CD8-positive, alpha-beta memory T cell (primary cell): ENCODE measurements at regions of chr6 and their contacts with region 1.

Region 1: DNA sequence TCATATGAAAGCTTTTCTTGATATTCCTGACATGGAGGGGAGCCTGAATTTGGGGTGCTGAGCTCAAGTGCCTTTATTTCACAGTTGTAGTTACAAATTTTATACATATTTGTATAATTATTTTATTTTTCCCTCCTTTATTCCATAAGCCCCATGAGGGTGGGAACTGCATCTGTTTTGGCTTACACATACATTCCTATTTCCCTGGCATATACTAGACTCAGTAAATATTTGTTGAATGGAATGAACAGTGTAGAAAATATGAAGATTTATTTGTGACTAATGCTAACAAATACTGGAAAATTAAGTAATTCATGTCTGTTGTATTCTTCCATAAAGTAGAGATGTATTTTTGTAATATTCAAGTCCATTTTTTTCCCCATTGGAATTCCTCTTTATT is 127.1 kb downstream of the MYO6 start:
- DNase-seq: no peak
- H3K4me3 ChIP-seq: no peak overlapping the region
- H3K4me3 Mint-ChIP-seq: no peak overlapping the region
- H3K27ac ChIP-seq: no peak overlapping the region
- H3K27ac Mint-ChIP-seq: no peak overlapping the region
- H3K4me1 ChIP-seq: no peaks in the 10 kb centered on the region
- H3K4me1 Mint-ChIP-seq: no peaks in the 10 kb centered on the region
- H3K27me3 ChIP-seq: no peaks in the 10 kb centered on the region
- H3K27me3 Mint-ChIP-seq: no peaks in the 10 kb centered on the region

Region 2: GRCh38 chr6:75893058-75893775 is 17.1 kb after region 1 on chr6:
- CTCF ChIA-PET with region 1: interaction called, 11 read pairs
- POLR2A ChIA-PET with region 1: no interaction called
- DNase-seq: peak in 2 of 5 donors; percentile 5 to 13
- H3K4me3 ChIP-seq: no peak overlapping the region
- H3K4me3 Mint-ChIP-seq: no peak overlapping the region
- H3K27ac ChIP-seq: no peak overlapping the region
- H3K27ac Mint-ChIP-seq: no peak overlapping the region
- H3K4me1 ChIP-seq: no peaks in the 10 kb centered on the region
- H3K4me1 Mint-ChIP-seq: peaks cover 0 to 5% (median 0%) of the 10 kb centered on the region in 3 donors
- H3K27me3 ChIP-seq: no peaks in the 10 kb centered on the region
- H3K27me3 Mint-ChIP-seq: peaks cover 0 to 1% of the 10 kb centered on the region in 2 donors